ENCODE measurements at regions of chr6 and their contacts with region 1.

Region 1: DNA sequence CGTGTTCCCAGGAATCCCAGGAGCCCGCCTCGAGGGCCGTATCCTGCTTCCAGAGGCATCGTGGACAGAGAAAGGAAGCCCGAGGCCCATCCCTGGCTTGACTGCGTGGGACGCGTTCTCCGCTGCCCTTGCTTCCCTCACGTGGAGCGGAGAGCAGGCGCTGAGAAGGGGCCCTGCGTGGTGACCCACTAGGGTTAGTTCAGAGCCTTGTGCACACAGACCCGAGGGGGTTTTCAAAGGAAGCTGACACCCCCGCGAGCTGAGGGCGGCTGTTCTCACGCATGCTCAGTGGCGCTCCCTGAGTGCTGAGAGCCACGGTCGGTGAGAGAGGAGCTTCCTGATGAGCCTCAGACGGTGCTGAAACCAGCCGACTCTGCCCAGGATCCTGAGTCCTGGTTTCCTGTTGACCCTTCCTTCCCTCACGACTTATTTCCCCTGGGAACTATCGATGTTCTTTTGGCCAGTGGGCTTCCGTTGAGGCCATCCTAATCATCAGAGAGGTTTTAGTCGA is 28.9 kb upstream of the CCR6 start:
- DNase-seq: peak; percentile 72 to 86 (median 74)
- H3K4me3 ChIP-seq: peak overlapping the region in 1 of 2 donors; percentile 40
- H3K4me3 Mint-ChIP-seq: peak overlapping the region; percentile 78 to 91 (median 83)
- H3K27ac ChIP-seq: peak overlapping the region; percentile 62
- H3K27ac Mint-ChIP-seq: peak overlapping the region; percentile 91 to 98 (median 95)
- H3K4me1 ChIP-seq: peaks cover 75% of the 10 kb centered on the region
- H3K4me1 Mint-ChIP-seq: peaks cover 53 to 87% (median 72%) of the 10 kb centered on the region in 4 donors
- H3K27me3 ChIP-seq: no peaks in the 10 kb centered on the region
- H3K27me3 Mint-ChIP-seq: no peaks in the 10 kb centered on the region

Region 2: DNA sequence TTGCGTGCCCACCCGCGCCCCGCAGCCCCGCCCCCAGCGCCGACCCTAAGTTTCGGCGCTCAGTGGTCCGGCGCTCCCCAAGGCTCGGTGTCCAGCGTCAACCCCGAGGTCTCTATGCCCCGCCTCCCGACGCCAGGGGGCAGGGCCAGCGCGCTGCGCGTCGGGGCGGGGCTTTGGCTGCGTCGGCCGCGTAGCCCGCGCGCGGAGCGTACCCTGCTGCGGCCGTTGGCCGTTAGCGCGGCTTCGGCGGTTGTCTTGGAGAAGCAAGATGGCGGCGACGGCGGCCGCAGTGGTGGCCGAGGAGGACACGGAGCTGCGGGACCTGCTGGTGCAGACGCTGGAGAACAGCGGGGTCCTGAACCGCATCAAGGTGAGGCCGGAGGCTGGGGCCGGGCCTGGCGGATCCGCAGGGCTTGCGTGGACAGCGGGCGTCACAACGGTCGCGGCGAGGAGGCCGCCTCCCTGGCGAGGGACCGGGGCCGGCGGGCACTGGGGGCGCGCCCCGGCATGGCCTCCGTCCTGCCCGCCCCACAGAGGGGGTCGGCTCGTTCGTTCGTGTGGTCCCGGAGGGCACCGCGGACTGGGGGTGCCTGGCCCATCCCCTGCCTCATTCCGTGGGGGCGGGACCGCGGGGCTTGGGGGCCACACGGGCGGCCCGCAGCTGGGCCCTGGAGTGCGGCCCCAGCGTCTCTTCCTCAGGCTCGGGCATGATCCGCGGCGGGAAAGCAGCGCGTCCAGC is 94.7 kb before region 1 on chr6 and contains the start of gene CEP43:
- CTCF ChIA-PET with region 1: interaction called, 6 read pairs
- POLR2A ChIA-PET with region 1: interaction called, 5 read pairs
- intact Hi-C with region 1: loop called (anchors 2 kb)
- DNase-seq: peak; percentile 81 to 89 (median 87)
- H3K4me3 ChIP-seq: peak within 1 kb of the TSS; percentile 85 to 95
- H3K4me3 Mint-ChIP-seq: peak within 1 kb of the TSS; percentile 90 to 95 (median 94)
- H3K27ac ChIP-seq: peak within 1 kb of the TSS; percentile 81
- H3K27ac Mint-ChIP-seq: peak within 1 kb of the TSS; percentile 65 to 93 (median 91)
- H3K4me1 ChIP-seq: peaks cover 38% of the 10 kb centered on the region
- H3K4me1 Mint-ChIP-seq: peaks cover 21 to 35% (median 30%) of the 10 kb centered on the region in 4 donors
- H3K27me3 ChIP-seq: no peaks in the 10 kb centered on the region
- H3K27me3 Mint-ChIP-seq: no peaks in the 10 kb centered on the region
- total RNA-seq, gene CEP43: 19.5 to 24.9 TPM

Region 3: DNA sequence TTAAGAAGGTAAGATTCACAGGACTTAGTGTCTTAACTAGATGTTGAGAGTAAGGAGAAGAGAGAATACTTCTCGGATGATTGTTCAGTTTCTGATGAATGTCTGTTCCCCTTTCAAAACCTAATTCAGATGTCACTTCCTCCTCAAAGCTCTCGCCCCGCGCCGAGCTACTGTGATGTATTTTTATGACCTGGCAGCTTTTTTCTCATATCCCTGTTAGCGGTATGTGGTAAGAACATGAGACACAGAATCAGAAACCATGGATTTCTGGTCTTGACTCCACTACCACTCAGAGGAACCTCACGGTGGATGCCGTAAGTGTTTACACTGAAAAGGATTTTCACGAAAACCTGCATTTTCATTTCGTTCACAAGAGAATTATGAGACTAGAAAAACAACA is 46.4 kb before region 1 on chr6:
- CTCF ChIA-PET with region 1: interaction called, 5 read pairs
- POLR2A ChIA-PET with region 1: interaction called, 13 read pairs
- intact Hi-C with region 1: no loop called
- DNase-seq: peak; percentile 49 to 67 (median 64)
- H3K4me3 ChIP-seq: peak overlapping the region in 1 of 2 donors; percentile 28
- H3K4me3 Mint-ChIP-seq: peak overlapping the region; percentile 56 to 82 (median 71)
- H3K27ac ChIP-seq: peak overlapping the region; percentile 30
- H3K27ac Mint-ChIP-seq: peak overlapping the region; percentile 64 to 97 (median 85)
- H3K4me1 ChIP-seq: peaks cover 49% of the 10 kb centered on the region
- H3K4me1 Mint-ChIP-seq: peaks cover 26 to 57% (median 39%) of the 10 kb centered on the region in 4 donors
- H3K27me3 ChIP-seq: no peaks in the 10 kb centered on the region
- H3K27me3 Mint-ChIP-seq: no peaks in the 10 kb centered on the region

Region 4: GRCh38 chr6:167056370-167056769 is 37.6 kb before region 1 on chr6:
- CTCF ChIA-PET with region 1: interaction called, 12 read pairs
- POLR2A ChIA-PET with region 1: interaction called, 8 read pairs
- intact Hi-C with region 1: loop called (anchors 2 kb)
- DNase-seq: peak; percentile 64 to 84 (median 75)
- H3K4me3 ChIP-seq: no peak overlapping the region
- H3K4me3 Mint-ChIP-seq: peak overlapping the region; percentile 12 to 76 (median 67)
- H3K27ac ChIP-seq: no peak overlapping the region
- H3K27ac Mint-ChIP-seq: peak overlapping the region; percentile 6 to 87 (median 76)
- H3K4me1 ChIP-seq: peaks cover 56% of the 10 kb centered on the region
- H3K4me1 Mint-ChIP-seq: peaks cover 37 to 57% (median 42%) of the 10 kb centered on the region in 4 donors
- H3K27me3 ChIP-seq: no peaks in the 10 kb centered on the region
- H3K27me3 Mint-ChIP-seq: no peaks in the 10 kb centered on the region

Region 5: GRCh38 chr6:167079853-167080297 is 14.1 kb before region 1 on chr6:
- CTCF ChIA-PET with region 1: interaction called, 3 read pairs
- POLR2A ChIA-PET with region 1: no interaction called
- intact Hi-C with region 1: loop called (anchors 2 kb)
- DNase-seq: peak; percentile 65 to 80 (median 73)
- H3K4me3 ChIP-seq: peak overlapping the region in 1 of 2 donors; percentile 21
- H3K4me3 Mint-ChIP-seq: peak overlapping the region; percentile 1 to 74 (median 62)
- H3K27ac ChIP-seq: peak overlapping the region; percentile 26
- H3K27ac Mint-ChIP-seq: peak overlapping the region in 6 of 7 donors; percentile 77 to 92 (median 84)
- H3K4me1 ChIP-seq: peaks cover 17% of the 10 kb centered on the region
- H3K4me1 Mint-ChIP-seq: peaks cover 16 to 22% (median 20%) of the 10 kb centered on the region in 4 donors
- H3K27me3 ChIP-seq: no peaks in the 10 kb centered on the region
- H3K27me3 Mint-ChIP-seq: no peaks in the 10 kb centered on the region

Region 6: DNA sequence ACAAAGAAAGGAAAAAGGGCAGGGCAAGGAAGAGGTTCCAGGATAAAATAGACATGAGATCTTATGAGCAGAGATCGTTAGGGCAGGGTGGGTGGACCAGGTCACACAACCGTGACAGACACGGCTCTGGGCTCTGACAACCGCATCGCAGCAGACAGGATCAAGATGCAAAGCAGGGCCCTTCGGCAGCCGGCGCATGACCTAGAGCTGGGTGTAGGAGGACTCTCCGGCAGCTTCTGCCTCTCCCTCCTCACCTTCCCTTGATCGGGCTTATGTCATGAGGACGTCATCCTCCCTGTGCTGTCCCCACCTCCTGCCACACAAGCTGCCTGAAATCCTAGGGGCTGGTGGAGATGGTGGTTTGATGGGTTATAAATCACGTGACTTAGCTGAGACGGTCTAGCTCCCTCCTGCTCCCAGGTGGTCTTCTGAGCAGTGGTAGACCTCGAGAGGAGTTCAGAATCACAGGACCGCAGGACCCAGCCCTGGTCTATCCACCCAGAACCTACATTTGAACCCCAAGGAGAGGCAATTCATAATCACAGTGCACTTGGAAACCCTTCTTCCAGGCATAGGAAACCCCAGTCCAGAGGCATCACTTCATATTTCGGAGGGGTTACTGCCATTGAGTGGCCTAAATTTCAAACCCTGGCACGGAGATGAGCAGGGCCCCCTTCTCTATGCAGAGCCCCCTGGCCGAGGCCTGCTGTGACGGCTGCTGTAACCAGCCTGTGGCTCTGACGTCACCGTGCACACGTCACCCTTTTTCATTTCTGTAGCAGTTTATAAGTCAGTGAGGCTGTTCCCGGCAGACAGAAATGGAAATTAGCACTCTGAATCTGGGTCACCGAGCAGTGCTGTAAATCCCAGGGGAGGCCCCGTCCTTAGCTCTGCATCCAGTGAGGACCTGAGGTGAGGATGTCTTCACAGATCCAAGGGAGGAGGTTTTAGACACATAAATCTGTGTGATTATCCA is 20.2 kb after region 1 on chr6:
- CTCF ChIA-PET with region 1: interaction called, 9 read pairs
- POLR2A ChIA-PET with region 1: interaction called, 68 read pairs
- intact Hi-C with region 1: loop called (anchors 2 kb)
- DNase-seq: peak; percentile 74 to 92 (median 84)
- H3K4me3 ChIP-seq: peak overlapping the region; percentile 64 to 87
- H3K4me3 Mint-ChIP-seq: peak overlapping the region; percentile 92 to 98 (median 95)
- H3K27ac ChIP-seq: peak overlapping the region; percentile 90
- H3K27ac Mint-ChIP-seq: peak overlapping the region; percentile 95 to 99 (median 98)
- H3K4me1 ChIP-seq: peaks cover 77% of the 10 kb centered on the region
- H3K4me1 Mint-ChIP-seq: peaks cover 63 to 90% (median 78%) of the 10 kb centered on the region in 4 donors
- H3K27me3 ChIP-seq: no peaks in the 10 kb centered on the region
- H3K27me3 Mint-ChIP-seq: peaks cover 0 to 1% of the 10 kb centered on the region in 2 donors

Region 7: GRCh38 chr6:167119670-167120381 is 25.8 kb after region 1 on chr6:
- CTCF ChIA-PET with region 1: interaction called, 9 read pairs
- POLR2A ChIA-PET with region 1: interaction called, 68 read pairs
- intact Hi-C with region 1: loop called (anchors 2 kb)
- DNase-seq: peak; percentile 85 to 91 (median 87)
- H3K4me3 ChIP-seq: peak overlapping the region in 1 of 2 donors; percentile 40
- H3K4me3 Mint-ChIP-seq: peak overlapping the region; percentile 65 to 85 (median 73)
- H3K27ac ChIP-seq: peak overlapping the region; percentile 63
- H3K27ac Mint-ChIP-seq: peak overlapping the region; percentile 94 to 98 (median 95)
- H3K4me1 ChIP-seq: peaks cover 85% of the 10 kb centered on the region
- H3K4me1 Mint-ChIP-seq: peaks cover 68 to 95% (median 79%) of the 10 kb centered on the region in 4 donors
- H3K27me3 ChIP-seq: no peaks in the 10 kb centered on the region
- H3K27me3 Mint-ChIP-seq: peaks cover 0 to 1% of the 10 kb centered on the region in 2 donors

Measured in CD4-positive, alpha-beta memory T cell (primary cell).